ENCODE measurements at regions of chr11 and their contacts with region 1.

Region 1: GRCh38 chr11:25981998-25982397 is 349.9 kb upstream of the ANO3 start:
- DNase-seq: no peak
- H3K4me3 ChIP-seq: no peak overlapping the region
- H3K27ac ChIP-seq: no peak overlapping the region
- H3K4me1 ChIP-seq: no peaks in the 10 kb centered on the region
- H3K27me3 ChIP-seq: no peaks in the 10 kb centered on the region
- CTCF ChIP-seq: peak in 3 of 4 experiments; percentile 43 to 62 (median 52)
- POLR2A ChIP-seq: no peak

Region 2: GRCh38 chr11:26227296-26227695 is 245.3 kb after region 1 on chr11:
- intact Hi-C with region 1: loop called (anchors 5 kb)
- DNase-seq: no peak
- H3K4me3 ChIP-seq: no peak overlapping the region
- H3K27ac ChIP-seq: no peak overlapping the region
- H3K4me1 ChIP-seq: no peaks in the 10 kb centered on the region
- H3K27me3 ChIP-seq: no peaks in the 10 kb centered on the region
- CTCF ChIP-seq: peak in 2 of 4 experiments; percentile 52 to 58
- POLR2A ChIP-seq: no peak

Region 3: GRCh38 chr11:26276798-26277424 is 294.9 kb after region 1 on chr11:
- intact Hi-C with region 1: loop called (anchors 5 kb)
- DNase-seq: peak; percentile 14
- H3K4me3 ChIP-seq: no peak overlapping the region
- H3K27ac ChIP-seq: no peak overlapping the region
- H3K4me1 ChIP-seq: no peaks in the 10 kb centered on the region
- H3K27me3 ChIP-seq: no peaks in the 10 kb centered on the region
- CTCF ChIP-seq: peak; percentile 64 to 81 (median 73)
- POLR2A ChIP-seq: no peak

Measured in prostate gland (tissue), 2 donors.